ENCODE measurements at regions of chr4 and their contacts with region 1.

Region 1: GRCh38 chr4:52911684-52912294 is 49.7 kb downstream of the RASL11B start:
- DNase-seq: peak; percentile 9
- ATAC-seq: peak; percentile 96
- H3K4me3 ChIP-seq: no peak overlapping the region
- H3K27ac ChIP-seq: no peak overlapping the region
- H3K4me1 ChIP-seq: no peaks in the 10 kb centered on the region
- H3K27me3 ChIP-seq: no peaks in the 10 kb centered on the region
- CTCF ChIP-seq: peak; percentile 68 to 94 (median 92)
- EP300 ChIP-seq: no peak
- POLR2A ChIP-seq: no peak
- RAD21 ChIP-seq: peak; percentile 51

Region 2: DNA sequence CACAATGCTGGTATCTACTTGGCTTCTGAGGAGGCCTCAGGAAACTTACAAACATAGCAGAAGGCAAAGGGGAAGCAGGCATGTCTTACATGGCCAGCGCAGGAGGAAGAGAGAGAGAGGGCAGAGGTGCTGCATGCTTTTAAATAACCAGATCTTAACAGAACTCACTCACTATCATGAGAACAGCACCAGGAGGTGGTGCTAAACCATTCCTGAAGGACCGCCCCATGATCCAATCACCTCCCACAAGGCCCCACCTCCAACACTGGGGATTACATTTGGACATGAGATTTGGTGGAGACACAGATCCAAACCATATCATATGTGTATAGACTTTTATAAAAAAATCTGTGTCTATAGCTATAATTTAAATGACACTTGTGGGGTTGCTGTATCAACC is 112.0 kb before region 1 on chr4:
- CTCF ChIA-PET with region 1: no interaction called
- POLR2A ChIA-PET with region 1: no interaction called
- RAD21 ChIA-PET with region 1: no interaction called
- SMC1A ChIA-PET with region 1: no interaction called
- in situ Hi-C with region 1: no loop called
- intact Hi-C with region 1: no loop called
- DNase-seq: no peak
- ATAC-seq: no peak
- H3K4me3 ChIP-seq: no peak overlapping the region
- H3K27ac ChIP-seq: no peak overlapping the region
- H3K4me1 ChIP-seq: no peaks in the 10 kb centered on the region
- H3K27me3 ChIP-seq: no peaks in the 10 kb centered on the region
- CTCF ChIP-seq: no peak
- EP300 ChIP-seq: no peak
- POLR2A ChIP-seq: no peak
- RAD21 ChIP-seq: no peak

Region 3: DNA sequence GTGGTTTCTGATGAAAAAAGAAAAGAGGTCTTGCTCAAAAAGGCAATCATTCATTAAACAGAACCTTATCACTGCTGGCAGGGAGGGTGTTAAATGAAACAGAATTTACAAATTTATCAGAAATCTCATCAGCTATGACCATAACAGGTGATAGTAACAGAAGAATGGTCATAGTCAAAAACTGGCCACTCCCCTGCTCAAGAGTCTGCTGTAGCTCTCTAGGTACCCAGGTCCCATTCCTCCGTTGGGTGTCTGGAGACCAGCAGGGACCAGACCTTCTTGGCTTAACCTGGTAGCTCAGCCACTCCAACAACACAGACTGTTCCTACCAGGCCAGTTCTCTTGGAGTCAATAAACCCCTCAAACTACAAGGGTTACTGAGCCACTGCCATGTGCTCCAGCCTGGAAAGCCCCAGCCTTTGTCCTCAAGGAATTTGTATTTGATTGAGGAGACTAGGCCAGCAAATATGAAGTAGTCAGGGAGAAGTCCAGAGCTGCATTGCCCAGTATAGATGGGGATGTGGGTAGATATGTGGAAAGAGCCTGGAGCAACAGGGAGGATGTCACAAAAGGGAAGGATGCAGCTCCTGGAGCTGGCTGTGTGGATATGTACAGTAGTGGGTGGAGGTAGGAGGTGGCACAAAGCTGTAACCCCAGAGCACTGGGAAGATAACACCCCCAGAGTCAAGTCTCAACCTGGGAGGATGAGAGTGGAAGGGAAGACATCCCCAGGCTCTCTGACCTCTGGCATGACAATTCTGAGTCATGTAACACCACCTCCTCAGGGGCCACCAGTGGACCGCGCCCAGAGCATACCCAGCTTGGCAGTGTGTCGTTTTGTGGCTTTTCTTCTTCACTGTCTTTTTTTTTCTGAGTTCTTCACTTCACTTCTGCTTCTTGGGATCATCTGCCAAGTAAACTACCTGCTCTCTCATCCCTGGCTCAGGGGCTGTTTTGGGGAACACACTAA is 27.8 kb before region 1 on chr4:
- CTCF ChIA-PET with region 1: interaction called, 18 read pairs
- POLR2A ChIA-PET with region 1: no interaction called
- RAD21 ChIA-PET with region 1: no interaction called
- SMC1A ChIA-PET with region 1: no interaction called
- in situ Hi-C with region 1: no loop called
- intact Hi-C with region 1: no loop called
- DNase-seq: no peak
- ATAC-seq: 0 out of 3 replicates have a peak, but pooled peaks have one; percentile 16
- H3K4me3 ChIP-seq: no peak overlapping the region
- H3K27ac ChIP-seq: no peak overlapping the region
- H3K4me1 ChIP-seq: no peaks in the 10 kb centered on the region
- H3K27me3 ChIP-seq: no peaks in the 10 kb centered on the region
- CTCF ChIP-seq: no peak
- EP300 ChIP-seq: no peak
- POLR2A ChIP-seq: no peak
- RAD21 ChIP-seq: no peak

Region 4: DNA sequence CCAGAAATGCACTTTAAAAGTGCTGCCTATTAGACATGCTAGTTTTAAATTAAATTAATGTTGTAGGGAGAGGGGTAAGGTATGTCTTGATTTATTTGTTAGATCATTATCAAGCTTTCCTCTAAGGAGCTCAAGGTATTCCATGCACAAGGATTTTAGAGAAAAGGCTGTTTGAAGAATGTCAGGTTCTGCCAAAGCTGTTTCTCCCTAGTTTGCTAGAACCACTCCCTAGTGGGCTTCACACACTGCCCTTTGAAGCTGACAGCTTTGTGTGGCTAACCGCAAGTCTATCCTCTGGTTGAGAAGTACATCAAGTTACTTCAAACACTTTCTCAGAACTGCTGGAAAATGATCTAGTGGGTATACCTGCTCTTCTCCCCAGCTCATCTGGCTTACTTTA is 17.3 kb before region 1 on chr4:
- CTCF ChIA-PET with region 1: interaction called, 13 read pairs
- POLR2A ChIA-PET with region 1: no interaction called
- RAD21 ChIA-PET with region 1: no interaction called
- SMC1A ChIA-PET with region 1: interaction called, 3 read pairs
- in situ Hi-C with region 1: no loop called
- intact Hi-C with region 1: no loop called
- DNase-seq: no peak
- ATAC-seq: no peak
- H3K4me3 ChIP-seq: no peak overlapping the region
- H3K27ac ChIP-seq: no peak overlapping the region
- H3K4me1 ChIP-seq: no peaks in the 10 kb centered on the region
- H3K27me3 ChIP-seq: no peaks in the 10 kb centered on the region
- CTCF ChIP-seq: no peak
- EP300 ChIP-seq: no peak
- POLR2A ChIP-seq: no peak
- RAD21 ChIP-seq: no peak

Region 5: GRCh38 chr4:52925531-52925968 is 13.8 kb after region 1 on chr4:
- CTCF ChIA-PET with region 1: interaction called, 14 read pairs
- POLR2A ChIA-PET with region 1: no interaction called
- RAD21 ChIA-PET with region 1: no interaction called
- SMC1A ChIA-PET with region 1: interaction called, 10 read pairs
- in situ Hi-C with region 1: no loop called
- intact Hi-C with region 1: no loop called
- DNase-seq: no peak
- ATAC-seq: no peak
- H3K4me3 ChIP-seq: no peak overlapping the region
- H3K27ac ChIP-seq: no peak overlapping the region
- H3K4me1 ChIP-seq: no peaks in the 10 kb centered on the region
- H3K27me3 ChIP-seq: no peaks in the 10 kb centered on the region
- CTCF ChIP-seq: no peak
- EP300 ChIP-seq: no peak
- POLR2A ChIP-seq: no peak
- RAD21 ChIP-seq: no peak

Region 6: GRCh38 chr4:52932591-52933470 is 21.0 kb after region 1 on chr4:
- CTCF ChIA-PET with region 1: interaction called, 13 read pairs
- POLR2A ChIA-PET with region 1: no interaction called
- RAD21 ChIA-PET with region 1: no interaction called
- SMC1A ChIA-PET with region 1: interaction called, 3 read pairs
- in situ Hi-C with region 1: no loop called
- intact Hi-C with region 1: no loop called
- DNase-seq: no peak
- ATAC-seq: no peak
- H3K4me3 ChIP-seq: no peak overlapping the region
- H3K27ac ChIP-seq: no peak overlapping the region
- H3K4me1 ChIP-seq: no peaks in the 10 kb centered on the region
- H3K27me3 ChIP-seq: no peaks in the 10 kb centered on the region
- CTCF ChIP-seq: no peak
- EP300 ChIP-seq: no peak
- POLR2A ChIP-seq: no peak
- RAD21 ChIP-seq: no peak